Breast epithelium (tissue), 4 donors: ENCODE measurements at regions of chr11 and their contacts with region 1.

Region 1: DNA sequence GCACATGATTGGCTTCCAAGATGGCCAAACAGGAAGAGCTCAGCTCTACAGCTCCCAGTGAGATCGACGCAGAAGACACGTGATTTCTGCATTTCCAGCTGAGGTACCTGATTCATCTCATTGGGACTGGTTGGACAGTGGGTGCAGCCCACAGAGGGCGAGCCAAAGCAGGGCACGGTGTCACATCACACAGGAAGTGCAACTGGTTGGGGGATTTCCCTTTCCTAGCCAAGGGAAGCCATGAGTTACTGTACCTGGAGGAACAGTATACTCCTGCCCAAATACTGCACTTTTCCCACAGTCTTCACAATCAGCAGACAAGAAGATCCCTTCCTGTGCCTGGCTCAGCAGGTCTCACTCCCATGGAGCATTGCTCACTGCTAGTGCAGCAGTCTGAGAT is 131.2 kb downstream of the DLG2 start:
- DNase-seq: no peak
- H3K4me3 ChIP-seq: no peak overlapping the region
- H3K27ac ChIP-seq: no peak overlapping the region
- H3K4me1 ChIP-seq: no peaks in the 10 kb centered on the region
- H3K27me3 ChIP-seq: no peaks in the 10 kb centered on the region
- CTCF ChIP-seq: no peak
- POLR2A ChIP-seq: no peak

Region 2: DNA sequence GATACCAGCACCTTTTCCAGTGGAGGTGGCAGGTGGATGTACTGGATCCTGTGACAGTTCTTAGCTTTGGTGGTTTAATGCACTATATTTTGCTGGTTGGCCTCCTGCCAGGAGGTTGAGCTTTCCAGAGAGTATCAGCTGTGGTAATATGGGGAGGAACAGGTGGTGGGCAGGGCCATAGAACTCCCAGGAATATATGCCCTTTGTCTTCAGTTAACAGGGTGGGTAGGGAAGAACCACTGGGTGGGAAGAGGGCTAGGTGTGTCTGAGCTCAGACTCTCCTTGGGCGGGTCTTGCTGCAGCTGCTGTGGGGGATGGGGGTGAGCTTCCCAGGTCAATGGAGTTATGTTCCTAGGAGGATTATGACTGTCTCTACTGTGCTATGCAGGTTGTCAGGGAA is 72.6 kb before region 1 on chr11:
- intact Hi-C with region 1: no loop called
- DNase-seq: no peak
- H3K4me3 ChIP-seq: no peak overlapping the region
- H3K27ac ChIP-seq: no peak overlapping the region
- H3K4me1 ChIP-seq: no peaks in the 10 kb centered on the region
- H3K27me3 ChIP-seq: no peaks in the 10 kb centered on the region
- CTCF ChIP-seq: no peak
- POLR2A ChIP-seq: no peak

Region 3: GRCh38 chr11:85540635-85541205 is 44.8 kb after region 1 on chr11:
- intact Hi-C with region 1: no loop called
- DNase-seq: no peak
- H3K4me3 ChIP-seq: no peak overlapping the region
- H3K27ac ChIP-seq: no peak overlapping the region
- H3K4me1 ChIP-seq: no peaks in the 10 kb centered on the region
- H3K27me3 ChIP-seq: no peaks in the 10 kb centered on the region
- CTCF ChIP-seq: no peak
- POLR2A ChIP-seq: no peak

Region 4: DNA sequence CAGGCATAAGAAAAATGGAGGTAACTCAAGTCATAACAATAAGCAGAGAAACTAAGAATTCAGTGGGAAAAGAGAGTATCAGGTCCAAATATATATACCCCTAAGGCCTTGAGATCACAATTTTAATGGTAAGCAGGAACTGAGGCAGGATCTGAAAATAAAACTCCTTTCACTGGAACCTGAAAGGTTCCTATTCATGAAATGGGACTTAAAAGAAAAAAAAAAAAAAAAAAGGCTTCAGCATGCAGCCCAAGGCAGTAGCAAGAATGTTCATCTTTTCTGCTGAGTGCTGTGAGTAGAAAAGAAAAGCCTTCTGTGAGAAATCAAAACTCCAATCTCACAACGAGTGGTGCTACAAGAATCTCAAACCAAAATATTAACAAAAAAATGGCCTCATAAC is 56.0 kb after region 1 on chr11:
- intact Hi-C with region 1: loop called (anchors 2 kb)
- DNase-seq: no peak
- H3K4me3 ChIP-seq: no peak overlapping the region
- H3K27ac ChIP-seq: no peak overlapping the region
- H3K4me1 ChIP-seq: no peaks in the 10 kb centered on the region
- H3K27me3 ChIP-seq: no peaks in the 10 kb centered on the region
- CTCF ChIP-seq: no peak
- POLR2A ChIP-seq: no peak

Region 5: GRCh38 chr11:85961930-85962363 is 466.0 kb after region 1 on chr11:
- intact Hi-C with region 1: no loop called
- DNase-seq: no peak
- H3K4me3 ChIP-seq: no peak overlapping the region
- H3K27ac ChIP-seq: no peak overlapping the region
- H3K4me1 ChIP-seq: no peaks in the 10 kb centered on the region
- H3K27me3 ChIP-seq: no peaks in the 10 kb centered on the region
- CTCF ChIP-seq: no peak
- POLR2A ChIP-seq: no peak